Heart right ventricle (tissue), 16 donors: ENCODE measurements at regions of chr16 and their contacts with region 1.

Region 1: DNA sequence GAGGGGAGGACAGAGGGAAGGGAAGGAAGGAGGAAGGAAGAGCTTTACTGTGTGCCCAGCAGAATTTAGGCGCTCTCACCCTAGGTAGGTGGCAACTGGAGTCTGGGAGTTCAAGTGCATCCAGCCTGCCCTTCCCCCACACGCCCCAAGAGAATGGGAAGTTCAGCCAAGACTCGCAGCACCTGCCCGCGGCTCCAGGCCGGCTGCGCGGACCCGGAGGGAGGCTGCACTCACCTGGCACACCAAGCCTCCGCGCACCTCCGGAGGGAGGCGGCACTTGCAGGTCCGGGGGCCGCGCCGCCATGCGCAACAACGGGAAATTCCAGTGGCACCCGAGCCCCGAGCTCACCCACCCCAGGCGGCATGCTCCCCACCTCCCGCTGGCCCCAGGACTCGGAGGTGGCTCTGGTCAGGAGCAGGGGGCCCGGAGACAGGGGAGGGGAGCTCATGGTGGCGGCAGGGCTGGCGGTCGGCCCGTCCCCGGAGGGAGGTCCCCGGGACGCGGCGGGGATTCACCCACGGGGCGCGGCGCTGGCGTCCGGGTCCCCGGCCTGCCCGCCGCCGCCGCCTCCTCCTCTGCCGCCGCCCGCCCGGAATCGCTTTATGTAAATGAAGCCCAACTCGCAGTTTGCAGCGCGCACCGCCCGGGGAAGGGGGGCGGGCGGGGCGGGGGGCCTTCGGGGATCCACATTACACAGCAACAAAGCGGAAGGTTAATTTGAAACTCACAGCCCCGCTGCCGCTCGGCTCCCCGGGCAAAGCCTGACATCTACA is at the start of gene ZFHX3:
- DNase-seq: peak; percentile 68 to 76
- ATAC-seq: peak; percentile 66 to 81 (median 72)
- H3K4me3 ChIP-seq: peak within 1 kb of the TSS; percentile 59 to 94 (median 82)
- H3K27ac ChIP-seq: peak within 1 kb of the TSS; percentile 77 to 96 (median 92)
- H3K4me1 ChIP-seq: peaks cover 22 to 89% (median 67%) of the 10 kb centered on the region in 9 donors
- H3K27me3 ChIP-seq: peaks cover 0 to 15% (median 0%) of the 10 kb centered on the region in 7 donors
- CTCF ChIP-seq: peak in 5 of 9 donors; percentile 11 to 57 (median 44)
- total RNA-seq, gene ZFHX3: 7.9 to 15.2 (median 11.7) TPM

Region 2: GRCh38 chr16:72832621-72833248 is 215.0 kb before region 1 on chr16:
- intact Hi-C with region 1: loop called in 7 of 10 experiments (anchors 5 to 10 kb)
- DNase-seq: peak; percentile 81 to 86
- ATAC-seq: peak; percentile 82 to 93 (median 92)
- H3K4me3 ChIP-seq: no peak overlapping the region
- H3K27ac ChIP-seq: peak overlapping the region in 5 of 10 donors; percentile 6 to 45 (median 27)
- H3K4me1 ChIP-seq: peaks cover 0 to 28% (median 11%) of the 10 kb centered on the region in 9 donors
- H3K27me3 ChIP-seq: no peaks in the 10 kb centered on the region
- CTCF ChIP-seq: peak; percentile 90 to 99 (median 95)

Region 3: GRCh38 chr16:72847187-72848027 is 200.3 kb before region 1 on chr16:
- intact Hi-C with region 1: loop called in 4 of 10 experiments (anchors 1 to 5 kb)
- DNase-seq: peak in 1 of 2 donors; percentile 33
- ATAC-seq: peak in 6 of 8 donors; percentile 16 to 51 (median 40)
- H3K4me3 ChIP-seq: no peak overlapping the region
- H3K27ac ChIP-seq: peak overlapping the region in 9 of 10 donors; percentile 51 to 84 (median 75)
- H3K4me1 ChIP-seq: peaks cover 11 to 81% (median 52%) of the 10 kb centered on the region in 9 donors
- H3K27me3 ChIP-seq: no peaks in the 10 kb centered on the region
- CTCF ChIP-seq: peak in 7 of 9 donors; percentile 42 to 65 (median 54)

Region 4: GRCh38 chr16:72932050-72932449 is 115.7 kb before region 1 on chr16:
- intact Hi-C with region 1: loop called in 4 of 10 experiments (anchors 5 to 10 kb)
- DNase-seq: no peak
- ATAC-seq: peak in 5 of 8 donors; percentile 17 to 51 (median 36)
- H3K4me3 ChIP-seq: no peak overlapping the region
- H3K27ac ChIP-seq: peak overlapping the region; percentile 3 to 78 (median 40)
- H3K4me1 ChIP-seq: peaks cover 0 to 70% (median 28%) of the 10 kb centered on the region in 9 donors
- H3K27me3 ChIP-seq: no peaks in the 10 kb centered on the region
- CTCF ChIP-seq: no peak

Region 5: DNA sequence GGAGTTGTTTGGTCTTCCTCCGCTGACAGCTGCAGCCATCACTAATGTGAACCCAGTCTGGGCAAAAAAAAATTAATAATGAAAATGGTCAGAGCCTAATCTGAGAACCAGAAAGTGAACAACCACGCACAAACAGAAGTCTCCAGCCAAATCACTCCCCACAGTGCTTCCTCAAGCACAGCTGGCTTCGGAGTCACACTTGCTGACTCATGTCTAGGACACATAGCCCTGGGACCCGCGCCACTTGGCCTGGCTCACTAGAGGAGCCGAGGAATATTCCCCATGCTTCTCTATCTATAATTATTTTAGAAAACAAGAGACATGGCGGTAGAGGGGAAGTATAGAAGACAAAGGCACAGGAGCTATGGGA is 108.9 kb before region 1 on chr16:
- intact Hi-C with region 1: loop called in 7 of 10 experiments (anchors 5 to 10 kb)
- DNase-seq: peak; percentile 83 to 91
- ATAC-seq: peak; percentile 94 to 98 (median 96)
- H3K4me3 ChIP-seq: peak overlapping the region in 4 of 10 donors; percentile 15 to 29 (median 24)
- H3K27ac ChIP-seq: peak overlapping the region; percentile 57 to 90 (median 81)
- H3K4me1 ChIP-seq: peaks cover 15 to 63% (median 44%) of the 10 kb centered on the region in 9 donors
- H3K27me3 ChIP-seq: no peaks in the 10 kb centered on the region
- CTCF ChIP-seq: no peak

Region 6: GRCh38 chr16:72947379-72948237 is 100.1 kb before region 1 on chr16:
- intact Hi-C with region 1: loop called in 4 of 10 experiments (anchors 5 to 10 kb)
- DNase-seq: no peak
- ATAC-seq: peak in 6 of 8 donors; percentile 12 to 49 (median 20)
- H3K4me3 ChIP-seq: no peak overlapping the region
- H3K27ac ChIP-seq: peak overlapping the region in 5 of 10 donors; percentile 35 to 67 (median 54)
- H3K4me1 ChIP-seq: peaks cover 4 to 38% (median 25%) of the 10 kb centered on the region in 9 donors
- H3K27me3 ChIP-seq: no peaks in the 10 kb centered on the region
- CTCF ChIP-seq: no peak

Region 7: GRCh38 chr16:72961121-72961763 is 86.5 kb before region 1 on chr16:
- intact Hi-C with region 1: no loop called
- DNase-seq: no peak
- ATAC-seq: peak in 3 of 8 donors; percentile 15 to 21 (median 18)
- H3K4me3 ChIP-seq: no peak overlapping the region
- H3K27ac ChIP-seq: no peak overlapping the region
- H3K4me1 ChIP-seq: peaks cover 0 to 31% (median 3%) of the 10 kb centered on the region in 9 donors
- H3K27me3 ChIP-seq: no peaks in the 10 kb centered on the region
- CTCF ChIP-seq: peak in 4 of 9 donors; percentile 30 to 43 (median 33)

Region 8: DNA sequence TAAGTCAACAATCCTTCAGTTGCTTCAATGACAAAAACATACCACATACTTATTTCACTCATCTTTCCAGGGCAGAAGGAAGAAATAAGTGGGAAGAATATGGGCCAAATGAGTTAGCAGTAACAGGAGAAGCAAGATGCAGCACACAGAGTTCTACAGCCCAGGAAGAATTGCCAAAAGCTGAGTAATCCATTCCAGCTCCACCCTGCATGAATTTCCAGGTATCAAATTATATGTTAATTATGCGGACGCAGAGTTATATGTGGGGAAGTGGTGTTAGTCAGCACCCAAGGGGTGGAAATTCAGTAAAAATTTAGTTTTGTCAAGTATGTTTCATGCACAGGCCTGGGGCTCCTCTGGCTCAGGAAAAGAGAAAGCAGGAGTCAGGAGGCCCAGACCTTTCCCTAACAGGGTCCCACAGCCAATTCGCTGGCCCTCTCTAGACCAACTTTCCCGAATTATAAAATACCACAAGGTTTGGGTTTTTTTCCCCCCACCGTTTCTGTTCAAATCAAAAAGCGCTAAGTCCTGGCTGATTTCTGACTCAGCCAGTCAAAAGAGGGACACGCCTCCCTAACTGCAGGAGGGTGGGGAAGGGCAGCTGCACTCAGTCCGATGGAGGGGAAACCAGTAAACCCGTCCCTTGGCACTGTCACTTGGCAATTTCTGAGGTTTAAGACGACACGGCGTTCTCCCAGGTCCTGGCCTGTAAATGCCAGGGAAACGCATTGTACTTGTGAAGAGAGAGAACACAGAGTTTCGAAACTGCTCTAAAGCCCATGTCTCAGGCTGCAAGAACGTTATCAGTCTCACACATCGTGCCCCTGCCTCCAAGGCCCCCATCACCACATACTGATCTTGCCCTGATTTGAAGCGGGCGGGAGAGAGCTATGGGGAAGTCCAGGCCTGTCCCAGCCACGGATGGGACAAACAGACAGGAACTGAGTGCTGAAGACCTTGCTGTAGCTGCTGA is 57.8 kb before region 1 on chr16:
- intact Hi-C with region 1: loop called in 2 of 10 experiments (anchors 5 kb)
- DNase-seq: peak; percentile 36 to 51
- ATAC-seq: peak in 7 of 8 donors; percentile 22 to 77 (median 44)
- H3K4me3 ChIP-seq: peak overlapping the region in 3 of 10 donors; percentile 10 to 18 (median 17)
- H3K27ac ChIP-seq: peak overlapping the region; percentile 36 to 74 (median 62)
- H3K4me1 ChIP-seq: peaks cover 22 to 90% (median 69%) of the 10 kb centered on the region in 9 donors
- H3K27me3 ChIP-seq: no peaks in the 10 kb centered on the region
- CTCF ChIP-seq: no peak

Region 9: DNA sequence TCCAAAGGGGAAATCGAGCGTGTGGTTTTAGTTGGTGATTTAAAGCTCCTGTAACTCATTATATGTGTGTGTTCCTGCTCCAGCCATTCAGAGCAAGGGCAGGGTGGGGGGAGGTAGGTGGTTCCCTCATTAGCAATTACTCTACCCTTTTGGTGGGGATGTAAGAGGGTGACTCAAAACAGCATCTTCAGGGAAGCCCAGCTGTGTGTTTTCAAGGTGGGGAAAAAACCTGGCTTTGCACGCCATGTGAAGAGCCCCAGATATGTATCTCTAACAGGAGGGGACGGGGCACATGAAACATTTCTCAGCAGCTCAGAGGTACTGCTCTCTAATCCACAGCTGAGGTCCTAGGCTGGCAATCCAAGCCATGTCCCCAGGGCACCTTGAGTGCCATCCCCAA is 241.5 kb after region 1 on chr16:
- intact Hi-C with region 1: no loop called
- DNase-seq: no peak
- ATAC-seq: no peak
- H3K4me3 ChIP-seq: no peak overlapping the region
- H3K27ac ChIP-seq: no peak overlapping the region
- H3K4me1 ChIP-seq: no peaks in the 10 kb centered on the region
- H3K27me3 ChIP-seq: peaks cover 0 to 21% (median 6%) of the 10 kb centered on the region in 7 donors
- CTCF ChIP-seq: no peak